Thyroid gland (tissue), 4 donors: ENCODE measurements at regions of chr2 and their contacts with region 1.

Region 1: GRCh38 chr2:73233154-73233931 is at the start of gene PRADC1:
- DNase-seq: peak; percentile 100
- H3K4me3 ChIP-seq: peak within 1 kb of the TSS; percentile 69 to 91 (median 75)
- H3K27ac ChIP-seq: peak within 1 kb of the TSS; percentile 83 to 99 (median 89)
- H3K4me1 ChIP-seq: peaks cover 12 to 13% of the 10 kb centered on the region in 2 donors
- H3K27me3 ChIP-seq: no peaks in the 10 kb centered on the region
- CTCF ChIP-seq: no peak
- POLR2A ChIP-seq: peak in 1 of 2 donors; percentile 79
- total RNA-seq, gene PRADC1: 14.3 to 65.2 (median 33.2) TPM

Region 2: DNA sequence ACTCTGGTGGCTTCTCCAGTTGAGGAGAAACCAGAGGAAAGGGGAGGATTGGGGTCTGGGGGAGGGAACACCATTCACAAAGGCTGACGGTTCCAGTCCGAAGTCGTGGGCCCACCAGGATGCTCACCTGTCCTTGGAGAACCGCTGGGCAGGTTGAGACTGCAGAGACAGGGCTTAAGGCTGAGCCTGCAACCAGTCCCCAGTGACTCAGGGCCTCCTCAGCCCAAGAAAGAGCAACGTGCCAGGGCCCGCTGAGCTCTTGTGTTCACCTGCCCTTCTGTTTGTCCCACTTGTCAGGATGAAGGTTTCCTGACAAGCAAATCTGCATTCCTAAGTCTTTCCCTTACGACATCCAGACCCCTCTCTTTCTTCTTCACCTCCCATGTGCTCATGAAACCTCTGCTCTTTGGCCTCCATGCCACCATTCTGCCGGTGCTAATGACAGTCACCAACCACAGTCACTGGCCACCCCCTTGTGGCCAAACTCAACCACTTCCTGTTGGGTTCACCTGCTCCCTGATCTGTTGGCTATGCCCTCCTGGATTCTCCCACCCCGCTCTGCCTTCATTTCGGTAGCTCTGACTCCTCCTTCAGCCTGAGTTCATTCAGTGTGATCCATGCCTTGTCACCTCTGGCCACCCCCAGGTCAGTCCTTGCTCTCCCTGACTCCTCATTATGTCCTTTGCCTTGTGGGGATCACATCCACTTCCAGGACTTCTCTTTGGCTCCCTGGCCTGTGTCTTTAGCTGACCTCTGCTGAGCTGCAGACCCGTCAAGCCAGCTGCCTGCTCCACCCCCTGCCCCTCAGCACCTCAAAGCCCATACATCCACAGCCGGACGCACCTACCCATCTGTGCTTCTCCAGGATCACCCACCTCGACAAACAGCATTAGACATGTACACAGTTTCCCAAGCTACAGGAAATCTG is 298.4 kb before region 1 on chr2:
- intact Hi-C with region 1: no loop called
- DNase-seq: no peak
- H3K4me3 ChIP-seq: no peak overlapping the region
- H3K27ac ChIP-seq: no peak overlapping the region
- H3K4me1 ChIP-seq: no peaks in the 10 kb centered on the region
- H3K27me3 ChIP-seq: no peaks in the 10 kb centered on the region
- CTCF ChIP-seq: peak in 3 of 6 experiments; percentile 13 to 21 (median 17)
- POLR2A ChIP-seq: no peak

Region 3: DNA sequence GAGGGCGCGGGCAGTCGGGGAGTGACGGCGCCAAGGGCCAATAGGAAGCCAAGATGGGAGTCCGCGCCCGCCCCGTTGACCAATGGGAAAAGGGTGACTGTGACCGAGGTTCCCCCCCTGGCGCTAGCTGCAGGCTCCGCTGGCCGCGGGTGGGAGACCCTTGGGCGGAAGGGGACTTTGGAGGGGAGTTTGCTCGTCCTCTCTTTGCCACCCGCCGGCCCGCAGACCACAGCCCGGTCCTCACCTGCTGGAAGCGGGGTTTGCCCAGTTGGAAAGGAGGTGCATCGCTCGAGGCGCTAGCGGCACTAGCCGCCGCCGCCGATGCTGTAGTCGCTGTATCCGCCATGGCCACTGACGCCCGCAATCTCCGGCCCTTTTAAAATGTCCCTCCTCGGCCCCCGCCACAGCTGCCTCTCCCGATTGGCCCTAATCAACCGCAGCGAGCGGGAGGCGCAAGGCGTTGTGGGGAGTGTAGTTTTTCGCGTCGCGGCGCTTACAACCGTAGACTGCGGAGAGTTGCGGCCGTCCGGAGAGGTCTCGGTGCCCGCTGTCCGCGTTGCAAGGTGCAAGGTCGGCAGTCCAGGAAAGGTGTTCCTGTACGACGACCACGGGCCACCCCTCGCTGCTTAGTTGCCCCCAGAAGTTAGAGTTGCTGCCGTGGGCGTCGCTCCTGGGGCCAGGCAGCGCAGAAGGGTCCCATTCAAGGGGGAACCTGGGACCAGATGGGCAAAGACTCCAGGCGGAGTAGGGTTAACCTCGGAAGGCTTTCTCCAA is 161.8 kb before region 1 on chr2 and contains the start of gene SFXN5:
- intact Hi-C with region 1: loop called (anchors 10 kb)
- DNase-seq: peak; percentile 97 to 98
- H3K4me3 ChIP-seq: peak within 1 kb of the TSS; percentile 90 to 96 (median 91)
- H3K27ac ChIP-seq: peak within 1 kb of the TSS; percentile 84 to 93 (median 86)
- H3K4me1 ChIP-seq: peaks cover 13 to 19% of the 10 kb centered on the region in 2 donors
- H3K27me3 ChIP-seq: no peaks in the 10 kb centered on the region
- CTCF ChIP-seq: peak in 3 of 6 experiments; percentile 13 to 30 (median 16)
- POLR2A ChIP-seq: peak in 1 of 2 donors; percentile 52
- total RNA-seq, gene SFXN5: 10.3 to 17.2 (median 16.5) TPM